ENCODE measurements at regions of chr9 and their contacts with region 1.

Region 1: GRCh38 chr9:122518226-122518625 is 715 bp upstream of the OR1J4 start:
- DNase-seq: no peak
- H3K4me3 ChIP-seq: no peak overlapping the region
- H3K27ac ChIP-seq: no peak overlapping the region
- H3K4me1 ChIP-seq: no peaks in the 10 kb centered on the region
- H3K27me3 ChIP-seq: no peaks in the 10 kb centered on the region
- CTCF ChIP-seq: no peak

Region 2: GRCh38 chr9:122742003-122742402 is 223.8 kb after region 1 on chr9 and contains the start of gene OR1L6:
- dilution Hi-C with region 1: loop called (anchors 25 kb)
- DNase-seq: no peak
- H3K4me3 ChIP-seq: no peak within 1 kb of the TSS
- H3K27ac ChIP-seq: no peak within 1 kb of the TSS
- H3K4me1 ChIP-seq: no peaks in the 10 kb centered on the region
- H3K27me3 ChIP-seq: no peaks in the 10 kb centered on the region
- CTCF ChIP-seq: no peak
- polyA plus RNA-seq, gene OR1L6: not detected in 3 replicates